Right ventricle myocardium superior (tissue), 1 donor: ENCODE measurements at regions of chr19 and their contacts with region 1.

Region 1: DNA sequence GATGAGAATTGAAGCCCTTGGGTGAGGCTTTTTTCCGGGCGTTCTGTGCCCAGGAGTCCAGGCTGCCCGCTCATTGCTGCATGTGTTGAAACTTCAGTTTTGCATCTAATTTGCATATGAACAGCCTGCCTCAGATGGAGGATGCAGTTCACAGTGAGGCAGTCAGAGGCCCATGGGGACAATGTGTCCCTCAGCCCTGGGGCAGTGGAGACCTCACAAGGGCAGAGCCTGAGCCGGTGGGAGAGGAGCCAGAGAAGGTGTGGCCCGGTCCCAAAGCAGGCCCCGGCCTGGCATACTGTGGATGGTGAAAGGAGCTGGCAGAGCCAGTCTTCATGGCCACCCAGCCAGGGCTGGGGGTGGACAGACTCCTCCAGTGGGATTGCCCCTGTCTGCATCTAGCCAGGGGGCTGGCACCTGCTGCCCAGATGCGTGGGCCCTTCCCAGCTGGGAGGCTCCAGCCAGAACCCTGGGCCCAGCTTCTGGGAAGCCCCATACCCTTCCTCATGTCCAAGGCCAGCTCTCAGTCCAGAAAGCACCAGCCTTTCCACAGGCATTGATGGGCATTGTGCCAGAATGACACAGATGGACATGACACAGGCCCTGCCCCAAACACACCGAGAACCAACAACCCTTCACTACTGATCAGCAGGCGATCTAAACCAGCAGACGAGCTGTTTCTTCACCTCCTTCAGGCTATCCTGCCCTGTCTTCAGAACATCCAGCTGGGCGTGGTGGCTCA is 32.9 kb upstream of the KCTD15 start:
- DNase-seq: no peak
- ATAC-seq: peak; percentile 72

Region 2: DNA sequence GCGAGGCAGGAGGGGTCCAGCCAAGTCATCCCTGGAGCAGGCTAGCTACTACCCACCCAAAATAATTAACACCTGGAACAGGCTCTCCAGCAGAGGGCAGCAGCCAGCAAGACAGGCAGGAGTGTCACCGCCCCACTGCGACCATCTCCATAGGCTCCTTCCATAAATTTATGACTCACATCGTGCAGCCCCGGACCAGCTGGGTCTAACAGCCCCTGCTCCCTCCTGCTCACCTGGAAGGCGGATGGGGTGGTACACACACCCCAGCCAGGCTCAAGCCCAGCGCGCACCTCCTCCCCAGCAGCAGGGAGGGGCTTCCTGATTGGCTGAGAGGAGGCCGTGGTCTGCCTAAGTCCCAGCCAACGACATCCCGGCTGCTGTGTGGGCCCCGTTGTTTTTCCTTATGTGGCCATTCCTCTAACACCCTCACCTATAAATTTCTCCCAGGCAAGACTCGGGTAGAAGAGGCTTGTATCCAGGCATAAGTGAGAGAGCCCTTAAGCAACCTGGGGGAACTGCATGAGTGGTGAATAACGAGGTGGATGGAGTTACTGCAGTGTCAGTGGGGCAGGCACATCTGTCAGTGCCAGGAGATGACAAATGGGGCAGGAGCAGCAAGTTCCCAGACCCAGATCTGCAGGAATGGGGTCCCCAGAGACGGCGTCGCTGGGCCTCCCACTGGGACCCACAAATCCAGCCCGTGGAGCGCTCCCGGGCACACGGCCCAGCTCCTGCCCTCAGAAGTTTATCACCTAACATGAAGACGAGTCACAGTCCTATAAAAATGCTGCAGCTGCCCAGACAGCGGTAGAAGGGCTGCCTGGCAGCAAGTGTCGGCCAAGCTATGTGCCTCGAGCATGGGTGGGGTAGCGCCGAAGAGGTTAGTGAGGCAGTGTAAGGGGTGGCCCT is 347.2 kb before region 1 on chr19:
- intact Hi-C with region 1: loop called (anchors 5 kb)
- DNase-seq: peak; percentile 72
- ATAC-seq: peak; percentile 60

Region 3: GRCh38 chr19:34041925-34042521 is 278.2 kb after region 1 on chr19:
- intact Hi-C with region 1: no loop called
- DNase-seq: peak; percentile 77
- ATAC-seq: no peak